Heart right ventricle (tissue), 16 donors: ENCODE measurements at regions of chr19 and their contacts with region 1.

Region 1: GRCh38 chr19:14769201-14769600 is 9.2 kb downstream of the ADGRE2 start:
- DNase-seq: no peak
- ATAC-seq: no peak
- H3K4me3 ChIP-seq: no peak overlapping the region
- H3K27ac ChIP-seq: no peak overlapping the region
- H3K4me1 ChIP-seq: no peaks in the 10 kb centered on the region
- H3K27me3 ChIP-seq: peaks cover 0 to 17% (median 3%) of the 10 kb centered on the region in 7 donors
- CTCF ChIP-seq: no peak

Region 2: DNA sequence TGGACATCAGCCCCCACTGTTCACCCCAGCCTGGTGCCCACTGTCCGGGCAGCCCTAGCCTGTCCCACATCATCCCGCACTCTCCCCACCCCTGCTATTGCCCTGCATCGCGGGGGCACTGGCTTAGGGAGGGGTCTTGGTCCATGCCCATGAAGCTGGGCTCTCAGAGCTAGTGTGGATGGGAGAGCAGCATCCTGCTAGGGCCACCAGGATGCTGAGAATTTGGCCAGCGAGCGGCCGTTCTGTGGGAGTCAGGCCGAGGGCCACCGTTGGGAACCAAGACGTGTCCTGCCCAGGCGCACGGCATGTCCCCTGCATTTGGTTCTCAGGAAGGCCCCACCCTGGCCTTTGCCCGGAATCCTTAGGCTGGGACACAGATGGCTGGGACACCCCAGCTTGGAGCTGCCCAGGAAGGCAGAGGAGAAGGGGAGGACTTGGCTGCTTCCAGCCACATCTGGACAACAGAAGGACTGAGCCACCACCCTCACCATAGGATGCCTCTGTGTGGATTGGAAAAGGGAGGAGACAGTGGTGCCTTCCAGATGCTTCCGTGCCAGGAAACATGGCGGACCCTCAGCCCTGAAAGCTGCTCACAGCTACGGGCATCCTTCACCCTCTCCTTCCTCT is 373.4 kb before region 1 on chr19:
- intact Hi-C with region 1: loop called in 1 of 10 experiments (anchors 10 kb)
- DNase-seq: no peak
- ATAC-seq: peak in 1 of 8 donors; percentile 16
- H3K4me3 ChIP-seq: no peak overlapping the region
- H3K27ac ChIP-seq: no peak overlapping the region
- H3K4me1 ChIP-seq: no peaks in the 10 kb centered on the region
- H3K27me3 ChIP-seq: no peaks in the 10 kb centered on the region
- CTCF ChIP-seq: no peak

Region 3: GRCh38 chr19:14674764-14675163 is 94.4 kb before region 1 on chr19 and contains the start of gene ADGRE3:
- intact Hi-C with region 1: no loop called
- DNase-seq: no peak
- ATAC-seq: no peak
- H3K4me3 ChIP-seq: peak within 1 kb of the TSS in 1 of 10 donors; percentile 35
- H3K27ac ChIP-seq: peak within 1 kb of the TSS in 2 of 10 donors; percentile 48 to 80
- H3K4me1 ChIP-seq: peaks cover 0 to 34% (median 0%) of the 10 kb centered on the region in 9 donors
- H3K27me3 ChIP-seq: peaks cover 0 to 51% (median 18%) of the 10 kb centered on the region in 7 donors
- CTCF ChIP-seq: no peak
- total RNA-seq, gene ADGRE3: 0.15 to 0.78 (median 0.26) TPM in 7 of 10 donors, not detected in the others